Activated CD4-positive, alpha-beta memory T cell treated with anti-CD3 and anti-CD28 coated beads for 36 hours (primary cell): ENCODE measurements at regions of chr9 and their contacts with region 1.

Region 1: DNA sequence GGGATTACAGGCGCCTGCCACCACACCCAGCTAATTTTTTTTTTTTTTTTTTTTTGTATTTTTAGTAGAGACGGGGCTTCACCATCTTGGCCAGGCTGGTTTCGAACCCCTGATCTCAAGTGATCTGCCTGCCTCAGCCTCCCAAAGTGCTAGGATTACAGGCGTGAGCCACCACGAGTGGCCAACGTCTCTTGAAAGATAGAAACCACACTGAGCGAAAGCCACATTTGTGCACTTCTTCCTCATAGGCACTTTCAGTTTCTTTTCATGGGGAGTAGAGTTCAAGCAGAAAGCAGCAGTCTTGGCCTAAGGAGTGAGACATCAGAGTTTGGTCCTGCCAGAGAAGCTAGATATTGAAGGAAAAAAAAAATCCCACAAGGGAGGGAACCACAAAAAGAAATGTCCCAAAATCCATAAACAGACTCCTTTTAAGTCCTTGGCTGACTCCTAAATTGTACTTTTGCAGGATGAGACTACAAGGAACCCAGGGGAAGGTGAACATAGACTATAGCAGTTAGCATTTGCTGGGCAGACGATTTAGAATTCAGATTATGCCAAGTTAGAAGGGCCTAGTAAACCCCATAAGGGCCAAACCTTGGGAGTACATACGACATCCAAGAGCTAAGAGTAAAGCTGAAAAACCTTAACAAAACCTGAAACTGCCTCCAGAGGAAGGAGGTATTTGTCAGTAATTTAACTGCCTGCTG is 43.9 kb upstream of the GLIPR2 start:
- DNase-seq: peak; percentile 62
- H3K4me3 Mint-ChIP-seq: no peak overlapping the region
- H3K27ac Mint-ChIP-seq: peak overlapping the region; percentile 26
- H3K4me1 Mint-ChIP-seq: peaks cover 14% of the 10 kb centered on the region
- H3K27me3 Mint-ChIP-seq: no peaks in the 10 kb centered on the region

Region 2: DNA sequence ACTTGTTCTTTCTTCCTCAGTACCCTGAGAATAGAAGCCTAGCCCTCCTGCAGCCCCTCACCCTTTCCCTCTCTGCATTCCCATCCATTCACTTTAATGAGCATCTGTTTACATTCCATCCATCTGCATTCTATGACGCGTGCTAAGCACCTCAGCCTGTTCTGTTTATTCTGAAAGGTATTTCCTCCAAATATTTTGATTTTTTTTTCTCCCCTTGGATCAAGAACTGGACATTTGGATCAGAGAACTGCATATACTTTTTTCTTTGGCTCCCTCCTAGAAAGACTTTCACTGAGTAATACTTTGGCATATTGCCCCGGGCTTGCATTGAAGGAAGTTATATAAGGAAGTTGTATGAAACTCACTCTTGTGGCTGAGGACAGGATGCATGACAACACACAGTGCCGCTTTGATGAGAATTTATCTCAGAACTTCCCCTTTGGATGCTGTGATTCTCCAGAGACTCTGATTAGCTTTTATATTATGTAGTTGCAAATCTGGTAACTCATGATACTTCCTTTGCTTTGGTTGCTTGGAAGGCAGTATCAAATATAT is 247.9 kb before region 1 on chr9:
- CTCF ChIA-PET with region 1: no interaction called
- POLR2A ChIA-PET with region 1: no interaction called
- intact Hi-C with region 1: no loop called
- DNase-seq: no peak
- H3K4me3 Mint-ChIP-seq: no peak overlapping the region
- H3K27ac Mint-ChIP-seq: no peak overlapping the region
- H3K4me1 Mint-ChIP-seq: peaks cover 36% of the 10 kb centered on the region
- H3K27me3 Mint-ChIP-seq: no peaks in the 10 kb centered on the region

Region 3: GRCh38 chr9:36074870-36075532 is 17.7 kb before region 1 on chr9:
- CTCF ChIA-PET with region 1: no interaction called
- POLR2A ChIA-PET with region 1: no interaction called
- intact Hi-C with region 1: loop called (anchors 2 kb)
- DNase-seq: no peak
- H3K4me3 Mint-ChIP-seq: no peak overlapping the region
- H3K27ac Mint-ChIP-seq: no peak overlapping the region
- H3K4me1 Mint-ChIP-seq: no peaks in the 10 kb centered on the region
- H3K27me3 Mint-ChIP-seq: no peaks in the 10 kb centered on the region